ENCODE measurements at regions of chr1 and their contacts with region 1.

Region 1: DNA sequence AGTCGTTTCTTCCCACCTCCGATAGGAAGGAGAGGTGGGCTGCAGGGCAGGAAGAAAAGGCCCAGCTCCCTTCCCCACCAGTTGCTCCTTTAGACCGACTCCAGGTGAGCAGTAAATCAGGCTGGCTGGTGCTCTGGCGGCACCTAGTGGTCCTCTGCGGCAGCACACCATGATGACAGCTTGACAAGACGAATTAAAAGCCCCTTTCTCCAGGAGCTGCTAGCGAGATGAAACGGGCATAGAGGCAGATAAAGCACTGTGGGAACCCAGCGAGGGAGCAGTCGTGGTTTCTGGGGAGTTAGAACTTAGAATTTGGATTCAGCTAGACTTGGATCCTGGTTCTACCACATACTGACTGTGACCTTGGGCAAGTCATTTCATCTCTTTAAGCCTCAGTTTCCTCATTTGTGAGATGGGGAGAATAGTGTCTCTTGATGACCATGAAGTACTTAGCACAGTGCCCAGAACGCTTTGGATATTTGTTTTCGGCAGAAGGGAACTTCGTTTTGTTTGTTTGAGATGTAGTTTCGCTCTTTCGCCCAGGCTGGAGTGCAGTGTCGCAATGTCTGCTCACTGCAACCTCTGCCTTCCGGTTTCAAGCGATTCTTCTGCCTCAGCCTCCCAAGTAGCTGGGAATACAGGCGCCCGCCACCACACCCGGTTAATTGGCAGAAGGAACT is 21.8 kb upstream of the COL9A2 start:
- DNase-seq: peak; percentile 83 to 94 (median 89)
- ATAC-seq: peak; percentile 99
- H3K4me3 ChIP-seq: peak overlapping the region; percentile 18
- H3K4me3 Mint-ChIP-seq: peak overlapping the region; percentile 2
- H3K27ac ChIP-seq: no peak overlapping the region
- H3K27ac Mint-ChIP-seq: no peak overlapping the region
- H3K4me1 ChIP-seq: peaks cover 27% of the 10 kb centered on the region
- H3K4me1 Mint-ChIP-seq: peaks cover 44% of the 10 kb centered on the region
- H3K27me3 ChIP-seq: no peaks in the 10 kb centered on the region
- H3K27me3 Mint-ChIP-seq: no peaks in the 10 kb centered on the region
- CTCF ChIP-seq: peak; percentile 90

Region 2: GRCh38 chr1:39919545-39919944 is 419.3 kb before region 1 on chr1:
- CTCF ChIA-PET with region 1: no interaction called
- POLR2A ChIA-PET with region 1: no interaction called
- intact Hi-C with region 1: loop called in 1 of 2 experiments (anchors 5 kb)
- DNase-seq: peak in 13 of 14 experiments; percentile 4 to 82 (median 21)
- ATAC-seq: peak; percentile 99
- H3K4me3 ChIP-seq: no peak overlapping the region
- H3K4me3 Mint-ChIP-seq: no peak overlapping the region
- H3K27ac ChIP-seq: no peak overlapping the region
- H3K27ac Mint-ChIP-seq: no peak overlapping the region
- H3K4me1 ChIP-seq: peaks cover 4% of the 10 kb centered on the region
- H3K4me1 Mint-ChIP-seq: no peaks in the 10 kb centered on the region
- H3K27me3 ChIP-seq: no peaks in the 10 kb centered on the region
- H3K27me3 Mint-ChIP-seq: peaks cover 4% of the 10 kb centered on the region
- CTCF ChIP-seq: peak; percentile 70

Region 3: GRCh38 chr1:40143891-40144575 is 194.9 kb before region 1 on chr1:
- CTCF ChIA-PET with region 1: interaction called, 31 read pairs
- POLR2A ChIA-PET with region 1: interaction called, 5 read pairs
- intact Hi-C with region 1: loop called (anchors 1 kb)
- DNase-seq: peak; percentile 3 to 84 (median 40)
- ATAC-seq: peak; percentile 85
- H3K4me3 ChIP-seq: no peak overlapping the region
- H3K4me3 Mint-ChIP-seq: no peak overlapping the region
- H3K27ac ChIP-seq: no peak overlapping the region
- H3K27ac Mint-ChIP-seq: no peak overlapping the region
- H3K4me1 ChIP-seq: peaks cover 4% of the 10 kb centered on the region
- H3K4me1 Mint-ChIP-seq: no peaks in the 10 kb centered on the region
- H3K27me3 ChIP-seq: peaks cover 0 to 6% of the 10 kb centered on the region in 2 experiments
- H3K27me3 Mint-ChIP-seq: peaks cover 24% of the 10 kb centered on the region
- CTCF ChIP-seq: peak; percentile 83

Region 4: GRCh38 chr1:40218333-40218732 is 120.6 kb before region 1 on chr1:
- CTCF ChIA-PET with region 1: no interaction called
- POLR2A ChIA-PET with region 1: no interaction called
- intact Hi-C with region 1: no loop called
- DNase-seq: no peak
- ATAC-seq: no peak
- H3K4me3 ChIP-seq: no peak overlapping the region
- H3K4me3 Mint-ChIP-seq: no peak overlapping the region
- H3K27ac ChIP-seq: no peak overlapping the region
- H3K27ac Mint-ChIP-seq: no peak overlapping the region
- H3K4me1 ChIP-seq: no peaks in the 10 kb centered on the region
- H3K4me1 Mint-ChIP-seq: no peaks in the 10 kb centered on the region
- H3K27me3 ChIP-seq: no peaks in the 10 kb centered on the region
- H3K27me3 Mint-ChIP-seq: no peaks in the 10 kb centered on the region
- CTCF ChIP-seq: no peak

Region 5: GRCh38 chr1:40281853-40282252 is 57.0 kb before region 1 on chr1:
- CTCF ChIA-PET with region 1: interaction called, 7 read pairs
- POLR2A ChIA-PET with region 1: no interaction called
- intact Hi-C with region 1: loop called in 1 of 2 experiments (anchors 2 kb)
- DNase-seq: no peak
- ATAC-seq: no peak
- H3K4me3 ChIP-seq: no peak overlapping the region
- H3K4me3 Mint-ChIP-seq: no peak overlapping the region
- H3K27ac ChIP-seq: no peak overlapping the region
- H3K27ac Mint-ChIP-seq: no peak overlapping the region
- H3K4me1 ChIP-seq: no peaks in the 10 kb centered on the region
- H3K4me1 Mint-ChIP-seq: no peaks in the 10 kb centered on the region
- H3K27me3 ChIP-seq: no peaks in the 10 kb centered on the region
- H3K27me3 Mint-ChIP-seq: no peaks in the 10 kb centered on the region
- CTCF ChIP-seq: no peak

Region 6: DNA sequence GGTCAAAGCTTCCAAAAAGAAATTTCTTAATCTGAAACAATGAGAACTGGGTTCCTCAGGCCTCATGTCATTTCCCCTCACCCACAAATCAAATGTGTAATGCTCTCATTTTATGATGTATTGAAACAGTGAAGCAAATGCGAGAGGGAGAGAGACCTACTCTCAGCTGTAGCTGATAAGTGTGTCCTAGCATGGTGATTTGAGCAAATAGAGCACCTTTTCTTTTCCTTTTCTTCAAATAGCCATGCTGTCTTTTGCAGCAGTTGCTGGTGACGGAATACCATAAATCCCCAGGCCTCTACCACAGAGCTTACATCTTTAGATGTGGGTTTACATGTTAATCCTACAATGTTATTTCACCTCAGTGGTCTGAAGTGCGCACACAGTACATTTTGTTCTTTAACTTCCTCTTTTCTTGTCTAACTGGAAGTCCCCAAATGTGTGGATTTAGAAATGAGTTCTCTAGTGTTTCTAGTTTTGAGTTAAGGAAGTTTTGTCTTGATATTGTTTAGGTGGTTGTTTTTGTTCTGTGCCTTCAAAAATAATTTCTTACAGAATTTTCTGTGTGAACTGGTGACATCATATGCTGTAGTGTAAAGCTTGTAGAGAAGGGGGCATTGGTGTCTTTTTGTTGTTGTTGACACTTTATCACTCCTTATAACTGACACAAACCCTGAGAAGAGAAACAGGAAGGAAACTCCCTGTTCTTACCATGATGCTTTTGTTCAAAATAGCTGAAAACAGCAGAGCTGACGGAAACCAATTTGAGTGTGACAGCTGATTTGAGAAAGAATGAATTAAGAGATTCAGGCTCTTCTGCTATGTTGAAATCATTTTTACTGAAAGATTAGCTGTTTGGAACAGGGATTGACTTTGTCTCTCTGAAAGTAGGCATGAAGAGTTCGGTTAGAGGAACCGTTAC is 46.8 kb after region 1 on chr1:
- CTCF ChIA-PET with region 1: interaction called, 29 read pairs
- POLR2A ChIA-PET with region 1: interaction called, 21 read pairs
- intact Hi-C with region 1: no loop called
- DNase-seq: peak in 13 of 14 experiments; percentile 19 to 95 (median 49)
- ATAC-seq: peak; percentile 69
- H3K4me3 ChIP-seq: peak overlapping the region; percentile 42
- H3K4me3 Mint-ChIP-seq: peak overlapping the region; percentile 83
- H3K27ac ChIP-seq: peak overlapping the region; percentile 92 to 95
- H3K27ac Mint-ChIP-seq: peak overlapping the region; percentile 96
- H3K4me1 ChIP-seq: peaks cover 86% of the 10 kb centered on the region
- H3K4me1 Mint-ChIP-seq: peaks cover 87% of the 10 kb centered on the region
- H3K27me3 ChIP-seq: no peaks in the 10 kb centered on the region
- H3K27me3 Mint-ChIP-seq: no peaks in the 10 kb centered on the region
- CTCF ChIP-seq: no peak

Region 7: DNA sequence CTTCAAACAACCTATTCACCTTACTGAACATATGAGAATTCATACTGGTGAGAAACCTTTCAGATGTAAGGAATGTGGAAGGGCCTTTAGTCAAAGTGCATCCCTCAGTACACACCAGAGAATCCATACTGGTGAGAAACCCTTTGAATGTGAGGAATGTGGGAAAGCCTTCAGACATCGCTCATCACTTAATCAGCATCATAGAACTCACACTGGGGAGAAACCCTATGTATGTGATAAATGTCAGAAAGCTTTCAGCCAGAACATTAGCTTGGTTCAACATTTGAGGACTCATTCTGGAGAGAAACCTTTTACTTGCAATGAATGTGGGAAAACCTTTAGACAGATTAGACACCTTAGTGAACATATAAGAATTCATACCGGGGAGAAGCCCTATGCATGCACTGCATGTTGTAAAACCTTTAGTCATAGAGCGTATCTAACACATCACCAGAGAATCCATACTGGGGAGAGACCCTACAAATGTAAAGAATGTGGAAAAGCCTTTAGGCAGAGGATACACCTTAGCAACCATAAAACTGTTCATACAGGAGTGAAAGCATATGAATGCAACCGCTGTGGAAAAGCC is 156.5 kb after region 1 on chr1:
- CTCF ChIA-PET with region 1: no interaction called
- POLR2A ChIA-PET with region 1: no interaction called
- intact Hi-C with region 1: no loop called
- DNase-seq: no peak
- ATAC-seq: no peak
- H3K4me3 ChIP-seq: no peak overlapping the region
- H3K4me3 Mint-ChIP-seq: no peak overlapping the region
- H3K27ac ChIP-seq: no peak overlapping the region
- H3K27ac Mint-ChIP-seq: no peak overlapping the region
- H3K4me1 ChIP-seq: no peaks in the 10 kb centered on the region
- H3K4me1 Mint-ChIP-seq: no peaks in the 10 kb centered on the region
- H3K27me3 ChIP-seq: no peaks in the 10 kb centered on the region
- H3K27me3 Mint-ChIP-seq: no peaks in the 10 kb centered on the region
- CTCF ChIP-seq: no peak